Ascending aorta (tissue), 2 donors: ENCODE measurements at regions of chr11 and their contacts with region 1.

Region 1: DNA sequence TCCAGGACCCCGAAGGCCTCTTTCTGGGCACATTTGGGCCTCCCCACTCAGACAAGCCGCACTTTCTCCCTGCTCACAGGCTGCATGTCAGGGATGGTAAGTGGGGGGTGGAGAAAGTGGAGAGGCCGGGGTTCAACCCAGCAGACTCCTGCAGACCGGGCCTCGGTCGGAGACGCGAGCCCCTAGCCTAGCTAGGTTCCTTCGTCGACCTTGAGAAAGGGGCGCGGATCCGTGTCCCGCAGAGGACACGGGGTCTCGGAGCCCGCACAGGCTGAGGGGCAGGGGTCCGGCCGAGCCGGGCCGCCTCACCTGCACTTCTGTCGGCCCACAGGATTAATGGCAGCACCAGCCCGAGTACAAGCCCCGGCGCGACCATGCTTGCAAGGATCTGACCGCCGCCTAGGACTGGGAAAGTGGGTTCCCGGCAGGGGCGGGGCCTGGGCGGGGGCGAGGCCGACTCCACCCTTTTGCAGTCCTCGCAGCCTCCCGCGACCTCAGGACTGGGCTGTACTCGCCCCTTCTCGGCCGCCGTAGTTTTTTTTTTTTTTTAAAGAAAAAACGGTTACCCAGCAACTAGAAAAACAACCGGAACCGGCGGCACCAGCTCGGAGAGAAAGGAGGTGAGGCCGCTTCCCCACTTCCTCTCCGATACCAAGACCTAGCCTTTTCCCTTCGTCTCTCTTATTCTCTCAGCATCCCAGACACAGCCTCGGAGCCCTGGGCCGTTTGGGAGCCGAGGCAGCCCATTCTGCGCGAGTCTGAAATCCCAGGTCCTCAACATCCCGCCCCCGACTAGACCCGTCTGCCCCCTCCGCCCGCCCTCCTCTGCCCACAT is at the starts of genes SIAE and SPA17:
- DNase-seq: peak; percentile 79 to 97
- H3K4me3 ChIP-seq: peak within 1 kb of the TSS; percentile 65 to 87
- H3K27ac ChIP-seq: peak within 1 kb of the TSS; percentile 85 to 86
- H3K4me1 ChIP-seq: peaks cover 4 to 25% of the 10 kb centered on the region in 2 donors
- H3K27me3 ChIP-seq: no peaks in the 10 kb centered on the region
- CTCF ChIP-seq: no peak
- total RNA-seq, gene SIAE: 4.8 TPM
- total RNA-seq, gene SPA17: not detected

Region 2: DNA sequence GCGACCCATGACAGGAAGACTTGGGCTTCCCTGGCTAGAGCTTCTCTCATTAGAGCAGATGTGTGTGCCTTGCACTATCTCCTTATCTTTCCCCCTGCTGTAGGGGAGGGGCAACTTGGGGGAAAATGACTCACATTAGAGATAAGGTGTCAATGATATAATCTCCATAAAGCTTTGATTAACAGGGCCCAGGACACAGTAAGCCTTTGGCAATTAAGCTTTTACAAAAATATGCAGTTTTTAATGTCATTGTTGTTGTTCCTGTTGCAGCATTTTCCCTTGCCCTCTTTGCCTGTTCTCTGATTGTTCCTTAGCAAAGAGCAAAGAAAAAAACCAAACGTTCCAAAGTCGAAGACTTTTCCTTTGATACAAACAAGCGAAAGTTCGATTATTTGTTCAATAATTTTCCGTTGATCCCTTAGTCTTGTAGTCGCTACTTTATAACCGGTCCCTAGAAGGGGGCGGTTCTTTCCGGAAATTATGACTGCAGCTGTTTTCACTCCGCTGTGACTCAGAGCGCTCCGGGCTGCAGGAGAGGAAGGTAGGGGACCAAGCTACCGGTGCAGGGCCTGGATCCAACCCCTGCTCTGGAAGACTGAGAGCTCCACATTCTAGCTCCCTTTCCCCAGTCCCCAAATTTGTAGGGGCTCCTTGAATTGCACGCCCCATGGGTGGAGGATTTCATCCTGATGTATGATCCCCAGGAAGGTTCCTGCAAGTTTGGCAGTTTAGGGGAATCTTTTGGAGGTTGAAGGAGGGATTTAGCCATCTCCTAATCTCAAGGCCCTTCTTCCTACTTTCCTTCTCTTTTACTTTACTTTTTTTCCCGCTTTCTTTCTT is 558.4 kb before region 1 on chr11 and contains the start of gene VWA5A:
- intact Hi-C with region 1: loop called (anchors 10 kb)
- DNase-seq: peak; percentile 44 to 92
- H3K4me3 ChIP-seq: peak within 1 kb of the TSS; percentile 49 to 72
- H3K27ac ChIP-seq: peak within 1 kb of the TSS; percentile 57 to 61
- H3K4me1 ChIP-seq: peaks cover 0 to 6% of the 10 kb centered on the region in 2 donors
- H3K27me3 ChIP-seq: no peaks in the 10 kb centered on the region
- CTCF ChIP-seq: no peak
- total RNA-seq, gene VWA5A: 7.6 TPM

Region 3: DNA sequence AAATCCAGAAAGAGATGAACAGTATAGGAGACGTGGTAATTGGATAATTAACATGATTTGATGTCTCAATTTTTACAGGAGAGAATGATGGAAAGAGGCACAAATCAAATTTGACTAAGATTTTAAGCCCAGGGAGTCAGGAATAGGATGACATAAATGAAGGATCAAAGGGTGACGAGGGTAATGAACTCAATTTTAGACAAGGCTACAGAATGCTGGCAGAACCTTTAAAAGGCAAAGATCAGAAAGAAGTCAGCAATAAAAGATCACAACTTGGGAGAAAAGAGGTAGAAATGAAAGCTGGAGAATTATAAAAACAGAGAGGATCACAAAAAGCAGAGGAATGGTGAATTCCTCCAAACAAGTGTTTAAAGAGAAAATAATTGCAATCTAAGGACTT is 116.7 kb before region 1 on chr11:
- intact Hi-C with region 1: no loop called
- DNase-seq: no peak
- H3K4me3 ChIP-seq: no peak overlapping the region
- H3K27ac ChIP-seq: no peak overlapping the region
- H3K4me1 ChIP-seq: no peaks in the 10 kb centered on the region
- H3K27me3 ChIP-seq: no peaks in the 10 kb centered on the region
- CTCF ChIP-seq: no peak

Region 4: DNA sequence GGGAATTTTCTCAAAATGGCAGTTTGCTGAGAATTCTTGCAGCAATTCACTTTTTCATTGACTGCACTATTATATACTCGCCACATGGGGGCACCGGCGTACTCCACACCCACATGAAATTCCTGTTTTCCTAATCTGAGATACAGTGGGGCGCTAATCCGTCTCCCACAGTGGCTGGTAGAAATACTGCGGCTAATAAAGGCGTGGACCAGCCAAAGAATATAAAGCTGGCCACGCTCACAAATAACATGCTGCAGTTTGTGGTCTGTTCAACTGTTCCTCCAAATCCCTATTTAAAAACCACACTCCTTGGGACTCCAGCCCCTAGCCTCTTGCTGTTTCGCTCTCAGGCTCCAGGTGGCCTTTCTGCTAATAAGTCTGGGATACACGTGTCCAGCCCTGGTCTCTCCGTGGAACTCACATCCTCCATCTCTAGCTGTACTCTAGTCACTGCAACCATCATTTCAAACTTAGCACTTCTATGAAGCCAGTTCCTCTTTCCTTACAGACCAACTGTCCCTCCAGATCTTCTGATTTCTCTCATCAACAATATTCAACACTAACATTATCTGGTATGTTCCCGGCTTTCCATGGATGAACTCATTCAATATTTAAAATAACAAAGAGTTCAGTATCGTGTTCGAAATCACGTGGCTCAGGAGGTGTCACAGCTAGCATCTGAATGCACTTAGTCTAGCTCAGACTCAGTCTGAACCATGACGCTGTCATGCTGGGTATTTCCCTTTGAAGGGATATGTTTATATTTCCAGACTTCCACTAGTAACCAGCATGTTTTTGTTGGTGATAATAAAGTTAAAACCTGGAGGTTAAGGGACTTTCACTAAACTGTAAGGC is 28.9 kb before region 1 on chr11:
- intact Hi-C with region 1: loop called (anchors 2 kb)
- DNase-seq: peak in 1 of 2 donors; percentile 79
- H3K4me3 ChIP-seq: peak overlapping the region in 1 of 2 donors; percentile 52
- H3K27ac ChIP-seq: peak overlapping the region; percentile 78 to 85
- H3K4me1 ChIP-seq: peaks cover 0 to 3% of the 10 kb centered on the region in 2 donors
- H3K27me3 ChIP-seq: no peaks in the 10 kb centered on the region
- CTCF ChIP-seq: peak; percentile 71 to 82 (median 75)

Region 5: DNA sequence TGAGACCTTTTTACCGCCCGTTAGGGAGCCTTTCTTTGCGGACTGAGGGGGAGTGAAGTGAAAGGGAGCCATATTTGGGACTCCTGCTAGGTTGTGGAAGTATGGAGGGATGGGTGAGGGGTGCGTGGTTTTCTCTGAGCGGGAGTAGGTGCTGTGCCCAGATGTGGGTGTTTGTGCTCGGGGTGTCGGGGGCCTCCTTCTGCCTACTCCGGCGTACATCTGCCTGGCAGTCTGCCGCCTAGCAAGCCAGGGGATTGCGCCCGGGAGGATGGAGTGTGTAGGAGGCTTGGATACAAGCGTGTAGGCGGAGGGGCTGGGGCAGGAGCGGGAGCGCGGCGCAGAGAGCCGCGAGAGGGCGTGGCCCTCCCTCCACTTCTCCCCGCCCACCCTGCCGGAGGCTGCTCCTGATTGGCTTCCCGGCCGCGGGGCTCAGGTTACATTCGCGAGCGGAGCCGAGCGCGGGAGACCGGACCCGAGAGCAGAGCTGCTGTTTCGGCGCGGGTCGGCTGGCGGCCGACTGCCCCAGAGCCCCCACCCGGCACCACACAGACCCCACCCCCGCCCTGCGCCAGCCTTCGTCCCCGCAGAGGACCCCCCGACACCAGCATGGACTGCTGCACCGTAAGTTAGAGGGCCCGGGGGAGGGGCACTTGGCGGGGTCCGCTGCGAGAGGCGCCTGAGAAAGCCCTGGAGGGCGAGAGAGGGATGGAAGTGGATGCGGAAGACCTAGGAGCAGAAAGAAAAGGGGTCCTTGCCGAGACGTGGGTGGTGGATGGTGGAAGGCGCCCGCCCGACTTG is 66.1 kb after region 1 on chr11 and contains the start of gene NRGN:
- intact Hi-C with region 1: loop called (anchors 1 kb)
- DNase-seq: peak; percentile 76 to 94
- H3K4me3 ChIP-seq: peak within 1 kb of the TSS; percentile 63 to 89
- H3K27ac ChIP-seq: peak within 1 kb of the TSS; percentile 28 to 78
- H3K4me1 ChIP-seq: peaks cover 13% of the 10 kb centered on the region in 2 donors
- H3K27me3 ChIP-seq: no peaks in the 10 kb centered on the region
- CTCF ChIP-seq: no peak
- total RNA-seq, gene NRGN: 5.3 TPM

Region 6: DNA sequence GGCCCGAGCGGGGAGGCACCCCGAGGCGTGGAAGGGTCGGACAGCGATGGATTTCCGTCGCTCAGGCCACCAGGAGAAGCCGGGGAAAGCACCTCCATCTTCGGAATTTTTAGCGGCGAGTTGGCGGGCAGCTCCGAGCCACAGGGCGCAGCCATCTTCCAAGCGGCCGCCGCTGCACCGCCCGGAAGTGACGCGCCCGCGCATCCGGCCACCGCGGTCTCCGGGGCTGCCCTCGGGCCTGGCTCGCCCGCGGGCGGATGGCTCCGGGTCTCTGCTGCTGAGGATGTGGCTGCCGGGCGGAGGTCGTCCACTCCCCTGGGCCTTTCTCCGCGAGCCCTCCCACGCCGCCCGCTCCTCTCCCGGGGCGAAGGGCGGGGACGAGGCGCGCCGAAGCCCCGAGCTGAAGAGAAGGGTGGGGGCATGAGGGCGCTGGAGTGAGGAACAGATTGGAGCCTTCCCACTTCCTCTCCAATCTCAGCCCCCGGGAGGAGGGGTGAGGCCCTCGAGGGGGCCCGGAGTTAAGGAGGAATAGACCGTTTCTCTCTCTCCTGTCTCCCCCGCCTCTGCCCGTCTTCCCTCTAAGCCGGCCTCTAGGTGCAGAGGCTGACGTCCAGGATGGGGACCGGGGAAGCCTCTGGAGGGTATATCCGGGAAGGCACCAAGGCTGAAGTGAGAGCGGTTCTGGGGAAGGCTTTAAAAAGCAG is 126.8 kb after region 1 on chr11 and contains the start of gene MSANTD2:
- intact Hi-C with region 1: loop called (anchors 1 kb)
- DNase-seq: peak; percentile 19 to 87
- H3K4me3 ChIP-seq: peak within 1 kb of the TSS; percentile 81 to 98
- H3K27ac ChIP-seq: peak within 1 kb of the TSS; percentile 99
- H3K4me1 ChIP-seq: peaks cover 13 to 16% of the 10 kb centered on the region in 2 donors
- H3K27me3 ChIP-seq: no peaks in the 10 kb centered on the region
- CTCF ChIP-seq: no peak
- total RNA-seq, gene MSANTD2: 21.4 TPM

Region 7: GRCh38 chr11:124875943-124876817 is 202.6 kb after region 1 on chr11:
- intact Hi-C with region 1: loop called (anchors 2 kb)
- DNase-seq: peak; percentile 53 to 91
- H3K4me3 ChIP-seq: peak overlapping the region; percentile 69
- H3K27ac ChIP-seq: peak overlapping the region; percentile 75 to 84
- H3K4me1 ChIP-seq: peaks cover 3 to 7% of the 10 kb centered on the region in 2 donors
- H3K27me3 ChIP-seq: no peaks in the 10 kb centered on the region
- CTCF ChIP-seq: peak; percentile 55 to 77 (median 59)

Region 8: GRCh38 chr11:125270711-125271110 is 597.2 kb after region 1 on chr11:
- intact Hi-C with region 1: no loop called
- DNase-seq: no peak
- H3K4me3 ChIP-seq: no peak overlapping the region
- H3K27ac ChIP-seq: no peak overlapping the region
- H3K4me1 ChIP-seq: peaks cover 4 to 6% of the 10 kb centered on the region in 2 donors
- H3K27me3 ChIP-seq: no peaks in the 10 kb centered on the region
- CTCF ChIP-seq: no peak